Naive thymus-derived CD4-positive, alpha-beta T cell (primary cell): ENCODE measurements at regions of chr1 and their contacts with region 1.

Region 1: DNA sequence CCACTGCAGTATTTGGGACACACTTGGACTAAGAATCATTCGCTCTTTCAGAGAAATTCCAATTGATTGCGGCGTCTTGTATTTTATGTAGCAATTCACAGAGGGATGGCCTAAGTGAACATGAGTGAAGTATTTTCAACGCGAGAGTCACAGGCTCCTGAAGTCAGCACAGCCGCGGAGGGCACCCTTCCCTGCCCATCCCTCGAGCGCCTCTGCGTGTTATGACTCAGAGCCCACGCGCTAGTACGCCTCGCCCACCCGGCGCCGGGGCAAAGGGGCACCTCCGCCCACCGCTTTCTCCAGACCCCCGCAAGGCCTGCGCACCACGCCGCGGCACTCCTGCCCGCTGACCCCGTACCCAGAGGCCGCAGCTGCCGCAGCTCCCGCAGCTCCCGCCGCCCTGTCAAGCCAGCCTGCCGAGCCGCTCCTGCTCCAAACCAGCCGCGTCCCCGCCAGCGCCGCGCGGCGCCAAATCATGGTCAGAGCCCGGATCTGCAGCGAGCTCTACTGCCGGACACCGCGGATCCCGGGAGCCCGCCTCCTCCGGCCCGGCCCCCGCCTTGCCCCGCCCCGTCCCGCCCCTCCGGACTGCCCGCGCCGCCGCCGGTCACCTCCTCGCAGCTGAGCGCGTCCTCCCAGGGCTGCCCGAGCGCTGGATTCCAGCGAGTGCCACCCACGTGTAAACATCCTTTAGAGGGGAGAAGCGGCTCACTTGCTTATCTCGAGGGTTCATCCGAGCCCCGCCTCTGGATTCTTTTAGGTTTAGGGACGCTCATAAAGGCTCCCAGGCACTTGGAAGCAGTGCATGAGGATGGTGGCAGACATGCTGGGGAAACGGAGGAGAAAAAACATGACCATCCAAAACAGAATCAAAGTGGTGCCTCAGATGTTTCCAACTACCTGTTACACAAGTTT is at the start of gene GLRX2:
- DNase-seq: peak; percentile 30 to 68 (median 48)
- ATAC-seq: peak; percentile 91
- H3K4me3 ChIP-seq: peak within 1 kb of the TSS; percentile 67
- H3K4me3 Mint-ChIP-seq: peak within 1 kb of the TSS; percentile 91 to 98 (median 94)
- H3K27ac ChIP-seq: peak within 1 kb of the TSS; percentile 57
- H3K27ac Mint-ChIP-seq: peak within 1 kb of the TSS; percentile 75 to 94 (median 81)
- H3K4me1 ChIP-seq: peaks cover 3 to 16% of the 10 kb centered on the region in 2 donors
- H3K4me1 Mint-ChIP-seq: peaks cover 13 to 28% (median 21%) of the 10 kb centered on the region in 7 donors
- H3K27me3 ChIP-seq: no peaks in the 10 kb centered on the region
- H3K27me3 Mint-ChIP-seq: peaks cover 0 to 9% (median 0%) of the 10 kb centered on the region in 5 donors
- total RNA-seq, gene GLRX2: 6.8 to 18.8 (median 11.4) TPM

Region 2: DNA sequence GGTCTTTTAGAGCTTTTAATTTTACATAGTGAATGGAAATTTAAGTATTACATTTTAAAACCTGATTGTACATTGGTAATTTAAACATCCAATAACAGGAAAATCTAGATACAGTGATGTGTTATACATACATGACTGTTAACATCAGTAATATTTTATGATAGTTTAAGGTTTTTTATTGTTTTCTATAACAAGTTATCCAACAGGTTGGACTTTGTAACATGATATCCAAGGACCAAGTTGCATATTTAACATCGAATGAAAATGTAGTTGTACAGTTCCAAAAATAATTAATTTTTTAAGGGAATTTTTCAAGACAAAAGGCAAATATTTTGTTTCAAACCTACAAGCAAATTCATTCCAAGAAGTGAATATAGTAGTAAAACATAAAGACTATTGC is 14.3 kb before region 1 on chr1:
- CTCF ChIA-PET with region 1: interaction called, 3 read pairs
- POLR2A ChIA-PET with region 1: interaction called, 3 read pairs
- intact Hi-C with region 1: loop called in 1 of 2 experiments (anchors 2 kb)
- DNase-seq: no peak
- ATAC-seq: no peak
- H3K4me3 ChIP-seq: no peak overlapping the region
- H3K4me3 Mint-ChIP-seq: no peak overlapping the region
- H3K27ac ChIP-seq: no peak overlapping the region
- H3K27ac Mint-ChIP-seq: no peak overlapping the region
- H3K4me1 ChIP-seq: no peaks in the 10 kb centered on the region
- H3K4me1 Mint-ChIP-seq: peaks cover 0 to 2% (median 0%) of the 10 kb centered on the region in 7 donors
- H3K27me3 ChIP-seq: no peaks in the 10 kb centered on the region
- H3K27me3 Mint-ChIP-seq: no peaks in the 10 kb centered on the region

Region 3: GRCh38 chr1:193156826-193157142 is 51.6 kb after region 1 on chr1:
- CTCF ChIA-PET with region 1: no interaction called
- POLR2A ChIA-PET with region 1: no interaction called
- intact Hi-C with region 1: no loop called
- DNase-seq: no peak
- ATAC-seq: no peak
- H3K4me3 ChIP-seq: no peak overlapping the region
- H3K4me3 Mint-ChIP-seq: no peak overlapping the region
- H3K27ac ChIP-seq: no peak overlapping the region
- H3K27ac Mint-ChIP-seq: peak overlapping the region in 7 of 9 donors; percentile 1 to 33 (median 4)
- H3K4me1 ChIP-seq: peaks cover 5 to 8% of the 10 kb centered on the region in 2 donors
- H3K4me1 Mint-ChIP-seq: peaks cover 13 to 59% (median 39%) of the 10 kb centered on the region in 7 donors
- H3K27me3 ChIP-seq: no peaks in the 10 kb centered on the region
- H3K27me3 Mint-ChIP-seq: no peaks in the 10 kb centered on the region